ENCODE measurements at regions of chr1 and their contacts with region 1.

Region 1: DNA sequence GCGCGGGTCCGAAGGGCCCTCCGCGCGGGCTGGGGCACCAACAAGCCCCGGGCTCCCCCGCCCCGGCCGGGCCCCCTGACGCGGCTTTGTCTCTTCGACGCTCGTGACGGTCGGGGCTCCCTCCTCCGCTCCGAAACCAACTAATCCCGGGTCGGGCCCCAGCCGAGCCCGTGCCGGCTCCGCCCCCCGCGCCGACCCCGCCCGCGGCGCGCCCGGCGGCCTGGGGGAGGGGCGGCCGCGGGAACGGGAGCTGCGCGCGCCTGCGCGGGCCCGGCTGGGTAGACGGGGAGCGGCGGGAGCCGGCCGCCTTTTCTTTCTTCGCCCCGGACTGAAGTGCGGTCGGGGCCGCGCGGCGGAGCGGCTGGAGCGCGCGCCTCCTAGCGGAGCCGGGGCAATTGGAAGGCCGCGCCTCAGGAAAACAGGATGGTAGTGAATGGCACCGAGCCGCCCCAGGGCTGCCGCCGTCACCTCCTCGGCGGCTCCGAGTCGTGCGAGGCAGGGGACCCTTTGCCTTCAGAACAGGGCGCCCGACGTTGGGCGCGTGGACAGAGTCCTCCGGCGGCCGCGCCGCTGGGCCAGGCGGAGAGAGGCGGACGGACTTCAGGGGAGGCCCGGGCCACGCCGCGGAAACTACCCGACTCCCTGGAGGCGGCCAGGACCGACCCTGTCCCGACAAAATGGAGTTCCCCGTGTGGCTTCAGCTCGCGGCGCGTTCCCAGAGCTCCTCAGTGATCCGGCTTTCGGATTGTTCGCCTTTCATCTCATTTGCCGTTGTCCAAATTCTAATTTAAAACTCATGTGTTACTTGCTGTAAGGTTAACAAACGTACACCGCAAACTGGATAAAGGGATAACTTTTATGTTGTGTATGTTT is at the start of gene TP53BP2:
- DNase-seq: peak; percentile 66 to 93 (median 86)
- ATAC-seq: peak; percentile 83
- H3K4me3 ChIP-seq: peak within 1 kb of the TSS; percentile 77 to 87
- H3K4me3 Mint-ChIP-seq: peak within 1 kb of the TSS; percentile 93
- H3K27ac ChIP-seq: peak within 1 kb of the TSS; percentile 87 to 92
- H3K27ac Mint-ChIP-seq: peak within 1 kb of the TSS; percentile 95
- H3K4me1 ChIP-seq: peaks cover 28% of the 10 kb centered on the region
- H3K4me1 Mint-ChIP-seq: peaks cover 29% of the 10 kb centered on the region
- H3K27me3 ChIP-seq: no peaks in the 10 kb centered on the region
- H3K27me3 Mint-ChIP-seq: no peaks in the 10 kb centered on the region
- CTCF ChIP-seq: peak; percentile 33
- total RNA-seq, gene TP53BP2: 96.1 to 98.3 TPM

Region 2: DNA sequence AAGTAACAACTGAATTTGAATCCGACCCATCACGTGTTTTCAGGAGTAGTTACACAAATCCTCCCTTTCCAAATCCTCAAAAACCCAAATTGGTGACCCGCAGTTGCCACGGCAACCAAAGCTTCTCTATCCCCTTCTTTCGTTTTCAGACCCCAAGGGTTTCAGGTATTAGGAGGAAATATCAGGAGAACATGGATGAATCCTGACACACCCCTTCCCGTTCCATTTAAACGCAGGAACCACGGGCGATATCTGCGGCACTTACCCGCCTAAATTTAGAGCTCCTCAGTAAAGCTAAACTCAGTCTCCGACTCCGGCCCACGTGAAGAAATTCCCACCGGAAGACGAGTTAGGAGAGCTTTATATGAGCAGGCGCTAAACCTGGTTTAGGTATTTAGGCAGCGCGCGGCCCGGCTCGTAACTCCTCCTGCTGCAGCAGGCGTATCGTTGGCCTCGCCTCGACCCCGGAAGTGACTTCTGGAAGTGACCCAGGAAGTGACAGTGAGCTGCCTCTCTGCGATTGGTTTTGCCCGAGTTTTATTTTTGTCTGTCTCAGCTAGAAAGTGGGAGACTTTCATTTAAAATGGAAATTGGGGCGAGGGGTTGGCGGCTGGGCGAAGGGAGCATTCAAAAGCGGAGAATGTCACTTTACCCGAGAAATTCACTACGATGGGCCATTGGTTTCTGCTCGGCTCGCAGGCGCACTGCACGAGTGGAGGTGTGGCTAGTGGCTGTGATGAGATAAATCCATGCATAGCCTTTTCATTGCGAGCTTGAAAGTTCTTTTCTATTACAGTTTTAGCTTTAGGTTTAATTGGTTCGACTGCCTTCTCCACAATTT is 1256.4 kb before region 1 on chr1 and contains the start of gene TAF1A:
- CTCF ChIA-PET with region 1: no interaction called
- POLR2A ChIA-PET with region 1: no interaction called
- intact Hi-C with region 1: loop called in 1 of 2 experiments (anchors 10 kb)
- DNase-seq: peak; percentile 69 to 93 (median 86)
- ATAC-seq: peak; percentile 98
- H3K4me3 ChIP-seq: peak within 1 kb of the TSS; percentile 68 to 77
- H3K4me3 Mint-ChIP-seq: peak within 1 kb of the TSS; percentile 98
- H3K27ac ChIP-seq: peak within 1 kb of the TSS; percentile 85 to 87
- H3K27ac Mint-ChIP-seq: peak within 1 kb of the TSS; percentile 99
- H3K4me1 ChIP-seq: peaks cover 11% of the 10 kb centered on the region
- H3K4me1 Mint-ChIP-seq: peaks cover 52% of the 10 kb centered on the region
- H3K27me3 ChIP-seq: no peaks in the 10 kb centered on the region
- H3K27me3 Mint-ChIP-seq: no peaks in the 10 kb centered on the region
- CTCF ChIP-seq: no peak
- total RNA-seq, gene TAF1A: 5.3 to 5.6 TPM

Region 3: GRCh38 chr1:223500560-223501425 is 345.3 kb before region 1 on chr1:
- CTCF ChIA-PET with region 1: no interaction called
- POLR2A ChIA-PET with region 1: no interaction called
- intact Hi-C with region 1: no loop called
- DNase-seq: no peak
- ATAC-seq: no peak
- H3K4me3 ChIP-seq: no peak overlapping the region
- H3K4me3 Mint-ChIP-seq: no peak overlapping the region
- H3K27ac ChIP-seq: no peak overlapping the region
- H3K27ac Mint-ChIP-seq: no peak overlapping the region
- H3K4me1 ChIP-seq: no peaks in the 10 kb centered on the region
- H3K4me1 Mint-ChIP-seq: no peaks in the 10 kb centered on the region
- H3K27me3 ChIP-seq: no peaks in the 10 kb centered on the region
- H3K27me3 Mint-ChIP-seq: no peaks in the 10 kb centered on the region
- CTCF ChIP-seq: no peak

Region 4: GRCh38 chr1:223811634-223812415 is 34.2 kb before region 1 on chr1:
- CTCF ChIA-PET with region 1: interaction called, 9 read pairs
- POLR2A ChIA-PET with region 1: interaction called, 13 read pairs
- intact Hi-C with region 1: loop called (anchors 1 kb)
- DNase-seq: peak in 2 of 9 experiments; percentile 52 to 64
- ATAC-seq: peak; percentile 74
- H3K4me3 ChIP-seq: no peak overlapping the region
- H3K4me3 Mint-ChIP-seq: no peak overlapping the region
- H3K27ac ChIP-seq: no peak overlapping the region
- H3K27ac Mint-ChIP-seq: no peak overlapping the region
- H3K4me1 ChIP-seq: peaks cover 6% of the 10 kb centered on the region
- H3K4me1 Mint-ChIP-seq: peaks cover 25% of the 10 kb centered on the region
- H3K27me3 ChIP-seq: no peaks in the 10 kb centered on the region
- H3K27me3 Mint-ChIP-seq: no peaks in the 10 kb centered on the region
- CTCF ChIP-seq: peak; percentile 73

Region 5: DNA sequence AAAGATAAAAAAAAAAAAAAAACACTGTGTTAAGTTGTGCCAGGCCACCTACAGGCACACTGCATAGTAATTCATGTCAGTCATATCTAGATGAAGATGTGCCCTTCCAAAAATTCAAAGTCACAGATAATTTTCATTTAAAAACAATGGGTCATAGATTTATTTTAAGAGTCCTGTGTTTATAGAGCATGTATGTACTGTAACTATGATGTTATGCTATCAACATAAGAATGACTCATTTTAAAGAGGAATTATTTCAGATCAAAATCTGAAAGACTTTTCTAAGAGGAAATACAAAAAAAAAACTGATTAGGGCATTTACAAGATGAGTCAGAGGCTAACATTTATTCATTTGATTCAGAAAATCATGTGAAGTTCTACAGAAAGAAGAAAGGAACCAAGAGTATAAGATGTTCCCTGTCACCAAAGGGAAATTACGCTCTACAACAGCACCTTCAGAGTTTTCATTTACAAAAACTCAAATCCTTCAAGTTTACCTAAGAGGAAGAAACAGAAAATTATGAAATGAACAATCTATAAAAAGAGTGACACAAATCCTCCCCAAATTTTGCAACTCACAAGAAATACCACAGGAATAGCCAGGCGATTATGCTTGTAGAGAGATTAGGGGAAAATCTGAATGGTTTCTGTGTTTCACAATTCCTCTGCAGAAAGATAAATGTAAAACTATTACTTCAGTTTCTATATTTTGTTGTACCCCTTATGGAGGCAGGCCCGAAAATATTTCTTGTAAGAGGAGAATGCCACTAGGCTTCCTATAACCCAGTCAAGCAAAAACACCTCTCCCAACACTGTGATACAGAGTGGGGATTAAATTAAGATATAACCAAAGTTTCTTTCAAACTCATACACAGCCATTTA is 14.1 kb before region 1 on chr1:
- CTCF ChIA-PET with region 1: interaction called, 9 read pairs
- POLR2A ChIA-PET with region 1: interaction called, 18 read pairs
- intact Hi-C with region 1: loop called (anchors 1 to 2 kb)
- DNase-seq: peak in 2 of 9 experiments; percentile 38 to 61
- ATAC-seq: peak; percentile 75
- H3K4me3 ChIP-seq: no peak overlapping the region
- H3K4me3 Mint-ChIP-seq: peak overlapping the region; percentile 23
- H3K27ac ChIP-seq: peak overlapping the region in 1 of 2 experiments; percentile 38
- H3K27ac Mint-ChIP-seq: peak overlapping the region; percentile 79
- H3K4me1 ChIP-seq: peaks cover 52% of the 10 kb centered on the region
- H3K4me1 Mint-ChIP-seq: peaks cover 29% of the 10 kb centered on the region
- H3K27me3 ChIP-seq: no peaks in the 10 kb centered on the region
- H3K27me3 Mint-ChIP-seq: no peaks in the 10 kb centered on the region
- CTCF ChIP-seq: no peak

Region 6: GRCh38 chr1:223887747-223888418 is 41.8 kb after region 1 on chr1:
- CTCF ChIA-PET with region 1: no interaction called
- POLR2A ChIA-PET with region 1: no interaction called
- intact Hi-C with region 1: no loop called
- DNase-seq: no peak
- ATAC-seq: no peak
- H3K4me3 ChIP-seq: no peak overlapping the region
- H3K4me3 Mint-ChIP-seq: no peak overlapping the region
- H3K27ac ChIP-seq: no peak overlapping the region
- H3K27ac Mint-ChIP-seq: no peak overlapping the region
- H3K4me1 ChIP-seq: no peaks in the 10 kb centered on the region
- H3K4me1 Mint-ChIP-seq: no peaks in the 10 kb centered on the region
- H3K27me3 ChIP-seq: no peaks in the 10 kb centered on the region
- H3K27me3 Mint-ChIP-seq: no peaks in the 10 kb centered on the region
- CTCF ChIP-seq: no peak

Region 7: GRCh38 chr1:224182866-224183590 is 337.0 kb after region 1 on chr1 and contains the start of gene DEGS1:
- CTCF ChIA-PET with region 1: no interaction called
- POLR2A ChIA-PET with region 1: interaction called, 8 read pairs
- intact Hi-C with region 1: loop called (anchors 5 to 10 kb)
- DNase-seq: peak; percentile 71 to 92 (median 84)
- ATAC-seq: peak; percentile 77
- H3K4me3 ChIP-seq: peak within 1 kb of the TSS; percentile 70 to 90
- H3K4me3 Mint-ChIP-seq: peak within 1 kb of the TSS; percentile 90
- H3K27ac ChIP-seq: peak within 1 kb of the TSS; percentile 88 to 94
- H3K27ac Mint-ChIP-seq: peak within 1 kb of the TSS; percentile 95
- H3K4me1 ChIP-seq: peaks cover 33% of the 10 kb centered on the region
- H3K4me1 Mint-ChIP-seq: peaks cover 48% of the 10 kb centered on the region
- H3K27me3 ChIP-seq: no peaks in the 10 kb centered on the region
- H3K27me3 Mint-ChIP-seq: no peaks in the 10 kb centered on the region
- CTCF ChIP-seq: no peak
- total RNA-seq, gene DEGS1: 52.1 to 54.7 TPM

Region 8: DNA sequence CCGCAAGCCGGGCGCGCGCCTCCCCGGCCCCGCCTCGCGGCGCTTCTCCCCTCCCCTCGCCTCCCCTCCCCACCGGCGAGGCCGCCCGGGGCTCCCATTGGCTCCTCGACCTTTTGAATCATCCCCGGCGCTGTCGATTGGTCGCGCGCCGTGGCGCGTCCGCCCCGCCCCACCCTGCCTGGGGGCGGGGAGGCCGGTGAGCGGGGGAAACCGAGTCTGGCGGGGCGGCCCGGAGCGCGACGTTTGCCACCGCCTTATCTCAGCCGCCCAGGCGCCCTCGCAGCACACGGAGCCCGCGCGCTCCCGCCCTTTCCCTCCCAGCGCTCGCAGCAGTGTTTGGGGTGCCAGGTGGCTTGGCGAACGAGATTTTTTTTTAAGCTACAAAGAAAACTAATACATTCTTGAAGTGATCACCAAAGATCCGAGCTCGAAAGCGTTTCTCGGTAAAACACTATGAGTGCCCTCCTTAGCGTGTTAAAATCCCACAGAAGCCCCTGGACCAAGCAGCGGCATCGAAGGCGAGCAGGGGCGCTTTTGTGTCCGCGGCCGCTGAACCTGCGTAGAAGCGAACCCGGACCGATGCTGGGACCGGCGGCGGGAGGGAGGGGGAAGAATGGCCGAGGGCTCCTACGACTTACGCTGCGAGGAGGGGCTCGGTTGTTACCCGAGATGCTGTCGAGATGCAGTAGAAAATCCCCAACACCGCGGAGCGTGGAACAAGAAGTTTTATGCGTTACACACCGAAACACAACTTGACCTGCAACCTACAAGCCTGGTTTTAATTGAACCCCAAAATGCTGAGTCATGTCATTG is 1582.2 kb after region 1 on chr1:
- CTCF ChIA-PET with region 1: no interaction called
- POLR2A ChIA-PET with region 1: no interaction called
- intact Hi-C with region 1: loop called in 1 of 2 experiments (anchors 10 kb)
- DNase-seq: peak; percentile 80 to 96 (median 91)
- ATAC-seq: peak; percentile 92
- H3K4me3 ChIP-seq: peak overlapping the region; percentile 80 to 89
- H3K4me3 Mint-ChIP-seq: peak overlapping the region; percentile 93
- H3K27ac ChIP-seq: peak overlapping the region; percentile 69 to 70
- H3K27ac Mint-ChIP-seq: peak overlapping the region; percentile 91
- H3K4me1 ChIP-seq: peaks cover 39% of the 10 kb centered on the region
- H3K4me1 Mint-ChIP-seq: peaks cover 44% of the 10 kb centered on the region
- H3K27me3 ChIP-seq: no peaks in the 10 kb centered on the region
- H3K27me3 Mint-ChIP-seq: no peaks in the 10 kb centered on the region
- CTCF ChIP-seq: no peak

Measured in CD8-positive, alpha-beta T cell (primary cell).